Activated CD8-positive, alpha-beta T cell treated with anti-CD3 and anti-CD28 coated beads for 36 hours (primary cell): ENCODE measurements at regions of chr15 and their contacts with region 1.

Region 1: GRCh38 chr15:80789296-80789695 is 10.1 kb downstream of the CEMIP start:
- DNase-seq: no peak
- ATAC-seq: no peak
- H3K4me3 Mint-ChIP-seq: no peak overlapping the region
- H3K27ac Mint-ChIP-seq: no peak overlapping the region
- H3K4me1 Mint-ChIP-seq: no peaks in the 10 kb centered on the region
- H3K27me3 Mint-ChIP-seq: peaks cover 18% of the 10 kb centered on the region
- CTCF ChIP-seq: no peak

Region 2: GRCh38 chr15:80804965-80805495 is 15.7 kb after region 1 on chr15:
- CTCF ChIA-PET with region 1: interaction called, 11 read pairs
- POLR2A ChIA-PET with region 1: no interaction called
- intact Hi-C with region 1: no loop called
- DNase-seq: peak; percentile 49
- ATAC-seq: peak; percentile 48
- H3K4me3 Mint-ChIP-seq: no peak overlapping the region
- H3K27ac Mint-ChIP-seq: peak overlapping the region; percentile 4
- H3K4me1 Mint-ChIP-seq: peaks cover 25% of the 10 kb centered on the region
- H3K27me3 Mint-ChIP-seq: no peaks in the 10 kb centered on the region
- CTCF ChIP-seq: no peak